OCI-LY7 (cell line): ENCODE measurements at regions of chr11 and their contacts with region 1.

Region 1: DNA sequence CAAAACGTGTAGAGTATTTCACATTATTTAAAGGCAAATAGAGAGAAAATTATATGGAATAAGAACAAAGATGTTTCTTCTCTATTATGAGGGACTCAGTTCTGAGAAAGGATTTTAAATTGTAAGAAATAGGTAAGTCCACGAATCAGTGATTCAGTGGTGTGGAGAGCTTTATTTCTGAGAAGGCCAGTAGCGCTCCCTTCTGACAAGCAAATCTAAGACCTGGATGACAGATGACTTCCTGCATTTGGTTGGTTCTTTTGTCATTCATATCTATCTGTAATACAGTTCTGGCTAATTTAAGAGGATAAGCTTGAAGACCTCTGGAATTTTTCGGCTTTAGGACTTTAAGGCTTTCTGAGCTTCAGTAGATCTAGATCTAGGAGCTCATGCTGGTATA is 7.0 kb downstream of the CD3E start:
- DNase-seq: peak; percentile 50
- H3K4me3 ChIP-seq: peak overlapping the region; percentile 43
- H3K27ac ChIP-seq: peak overlapping the region; percentile 99
- H3K4me1 ChIP-seq: peaks cover 60% of the 10 kb centered on the region
- CTCF ChIP-seq: peak; percentile 66

Region 2: GRCh38 chr11:118251858-118252652 is 59.5 kb before region 1 on chr11 and contains the start of gene MPZL3:
- CTCF ChIA-PET with region 1: no interaction called
- POLR2A ChIA-PET with region 1: no interaction called
- intact Hi-C with region 1: loop called (anchors 1 kb)
- DNase-seq: peak; percentile 91
- H3K4me3 ChIP-seq: peak within 1 kb of the TSS; percentile 80
- H3K27ac ChIP-seq: peak within 1 kb of the TSS; percentile 65
- H3K4me1 ChIP-seq: peaks cover 7% of the 10 kb centered on the region
- CTCF ChIP-seq: no peak
- total RNA-seq, gene MPZL3: 1.9 and 2.2 TPM in 2 replicates